AG04450 (cell line): ENCODE measurements at regions of chr18 and their contacts with region 1.

Region 1: GRCh38 chr18:59899298-59900221 is at the start of gene PMAIP1:
- DNase-seq: peak; percentile 93
- H3K4me3 ChIP-seq: peak within 1 kb of the TSS; percentile 90
- H3K27ac ChIP-seq: peak within 1 kb of the TSS; percentile 91
- H3K27me3 ChIP-seq: no peaks in the 10 kb centered on the region
- CTCF ChIP-seq: no peak
- polyA plus RNA-seq, gene PMAIP1: 38.8 and 57.1 TPM in 2 replicates

Region 2: GRCh38 chr18:59758106-59758505 is 141.5 kb before region 1 on chr18:
- CTCF ChIA-PET with region 1: no interaction called
- POLR2A ChIA-PET with region 1: no interaction called
- DNase-seq: no peak
- H3K4me3 ChIP-seq: no peak overlapping the region
- H3K27ac ChIP-seq: no peak overlapping the region
- H3K27me3 ChIP-seq: no peaks in the 10 kb centered on the region
- CTCF ChIP-seq: no peak

Region 3: GRCh38 chr18:59837586-59837985 is 62.0 kb before region 1 on chr18:
- CTCF ChIA-PET with region 1: interaction called, 8 read pairs
- POLR2A ChIA-PET with region 1: interaction called, 19 read pairs
- DNase-seq: no peak
- H3K4me3 ChIP-seq: no peak overlapping the region
- H3K27ac ChIP-seq: no peak overlapping the region
- H3K27me3 ChIP-seq: no peaks in the 10 kb centered on the region
- CTCF ChIP-seq: peak; percentile 94

Region 4: DNA sequence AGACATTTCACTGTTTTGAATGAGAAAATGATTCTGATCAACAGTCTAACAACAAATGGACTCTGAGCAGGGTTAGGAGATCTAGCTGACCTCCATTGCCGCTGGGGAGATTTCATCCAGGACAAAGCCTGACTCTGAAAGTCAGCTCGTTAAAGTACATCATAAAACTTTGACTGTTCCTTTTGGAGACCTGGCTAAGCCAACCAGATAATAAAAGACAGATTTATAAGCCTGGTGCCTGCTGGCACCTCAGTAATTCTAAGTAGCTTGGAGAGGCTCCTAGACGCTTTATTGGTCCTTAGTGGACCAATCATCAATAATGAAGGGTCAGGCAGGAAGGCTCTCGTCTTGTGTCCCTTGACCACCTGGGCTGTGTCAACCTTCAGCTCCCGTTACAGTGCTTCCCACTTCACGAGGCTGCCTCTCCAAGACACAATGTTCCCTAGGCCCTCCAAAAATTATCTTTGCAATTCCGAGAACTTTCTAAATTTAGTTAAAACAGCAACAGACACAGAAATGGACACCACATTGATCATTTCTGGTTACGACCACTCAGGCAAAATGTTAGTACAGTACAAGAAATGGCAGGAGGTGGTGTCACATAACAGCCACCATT is 47.7 kb before region 1 on chr18:
- CTCF ChIA-PET with region 1: no interaction called
- POLR2A ChIA-PET with region 1: interaction called, 15 read pairs
- DNase-seq: no peak
- H3K4me3 ChIP-seq: no peak overlapping the region
- H3K27ac ChIP-seq: no peak overlapping the region
- H3K27me3 ChIP-seq: no peaks in the 10 kb centered on the region
- CTCF ChIP-seq: no peak

Region 5: GRCh38 chr18:59874166-59874565 is 25.4 kb before region 1 on chr18:
- CTCF ChIA-PET with region 1: no interaction called
- POLR2A ChIA-PET with region 1: interaction called, 18 read pairs
- DNase-seq: peak; percentile 81
- H3K4me3 ChIP-seq: no peak overlapping the region
- H3K27ac ChIP-seq: peak overlapping the region; percentile 87
- H3K27me3 ChIP-seq: no peaks in the 10 kb centered on the region
- CTCF ChIP-seq: no peak

Region 6: DNA sequence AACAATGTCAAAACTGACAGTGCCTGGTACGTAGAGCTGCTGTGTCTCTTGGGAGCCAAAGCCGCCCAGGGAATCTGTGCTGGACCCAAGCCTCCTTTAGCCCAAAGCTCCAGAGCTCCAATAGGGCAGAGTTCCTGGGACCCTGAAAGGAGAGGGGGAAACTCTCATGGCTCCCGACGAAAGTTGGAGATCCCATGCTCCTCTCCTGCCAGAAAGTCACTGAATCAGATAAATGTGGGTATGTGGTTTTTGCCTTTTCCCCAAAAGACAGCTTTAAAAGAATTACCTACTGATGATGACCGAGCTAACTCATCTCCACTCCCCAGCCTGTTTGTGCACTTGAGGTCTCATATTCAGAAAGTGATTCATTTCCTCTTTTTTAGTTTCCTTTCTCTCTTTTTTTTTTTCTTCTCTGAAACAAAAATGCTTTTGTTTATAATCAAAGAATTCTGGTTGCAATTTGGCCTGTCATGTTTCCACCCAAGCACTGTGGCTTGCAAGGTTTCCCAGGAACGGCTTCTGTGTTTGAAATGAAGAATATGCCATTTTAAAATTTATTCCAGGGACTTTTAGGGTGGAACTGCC is 13.9 kb before region 1 on chr18:
- CTCF ChIA-PET with region 1: interaction called, 4 read pairs
- POLR2A ChIA-PET with region 1: interaction called, 24 read pairs
- DNase-seq: no peak
- H3K4me3 ChIP-seq: peak overlapping the region; percentile 11
- H3K27ac ChIP-seq: peak overlapping the region; percentile 93
- H3K27me3 ChIP-seq: no peaks in the 10 kb centered on the region
- CTCF ChIP-seq: no peak

Region 7: DNA sequence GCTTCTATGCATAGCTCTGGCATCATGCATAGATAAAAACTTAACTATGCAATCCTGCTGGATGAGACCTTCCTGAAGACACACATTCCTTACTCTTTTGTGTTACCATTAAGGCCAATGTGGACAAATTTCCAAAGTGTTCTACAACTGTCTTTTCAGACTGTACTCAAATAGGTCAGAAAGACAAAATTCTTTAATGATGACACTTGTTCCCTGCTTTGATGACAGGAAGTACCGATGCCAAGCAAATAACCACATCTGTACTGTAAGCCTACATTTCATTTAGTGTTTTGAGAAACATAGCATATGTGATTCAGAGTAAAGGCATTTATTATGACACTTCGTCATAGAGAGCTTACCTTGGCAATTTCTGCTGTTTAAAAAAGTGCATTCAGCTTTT is 55.2 kb after region 1 on chr18:
- CTCF ChIA-PET with region 1: no interaction called
- POLR2A ChIA-PET with region 1: interaction called, 27 read pairs
- DNase-seq: peak; percentile 24
- H3K4me3 ChIP-seq: no peak overlapping the region
- H3K27ac ChIP-seq: no peak overlapping the region
- H3K27me3 ChIP-seq: no peaks in the 10 kb centered on the region
- CTCF ChIP-seq: no peak

Region 8: DNA sequence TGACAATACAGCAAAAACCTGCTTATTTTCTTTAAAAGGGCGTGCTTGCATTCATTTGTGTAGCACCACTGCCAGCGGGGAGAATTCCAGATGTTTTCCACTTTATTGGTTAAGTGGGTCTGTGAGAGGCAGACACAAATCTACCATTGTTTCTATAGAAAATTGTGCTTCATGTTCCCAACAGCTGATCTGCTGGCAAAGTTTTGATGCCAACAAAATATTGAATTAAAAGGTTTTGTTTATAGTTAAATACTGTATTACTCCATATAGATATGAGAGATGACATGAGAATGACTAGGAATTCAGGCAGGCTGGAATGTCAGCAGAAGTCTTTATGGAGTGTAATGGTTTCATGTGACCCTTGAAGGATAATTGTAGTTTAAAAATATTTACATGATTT is 290.3 kb after region 1 on chr18:
- CTCF ChIA-PET with region 1: no interaction called
- POLR2A ChIA-PET with region 1: no interaction called
- DNase-seq: no peak
- H3K4me3 ChIP-seq: no peak overlapping the region
- H3K27ac ChIP-seq: no peak overlapping the region
- H3K27me3 ChIP-seq: no peaks in the 10 kb centered on the region
- CTCF ChIP-seq: no peak